ENCODE measurements at regions of chr11 and their contacts with region 1.

Region 1: DNA sequence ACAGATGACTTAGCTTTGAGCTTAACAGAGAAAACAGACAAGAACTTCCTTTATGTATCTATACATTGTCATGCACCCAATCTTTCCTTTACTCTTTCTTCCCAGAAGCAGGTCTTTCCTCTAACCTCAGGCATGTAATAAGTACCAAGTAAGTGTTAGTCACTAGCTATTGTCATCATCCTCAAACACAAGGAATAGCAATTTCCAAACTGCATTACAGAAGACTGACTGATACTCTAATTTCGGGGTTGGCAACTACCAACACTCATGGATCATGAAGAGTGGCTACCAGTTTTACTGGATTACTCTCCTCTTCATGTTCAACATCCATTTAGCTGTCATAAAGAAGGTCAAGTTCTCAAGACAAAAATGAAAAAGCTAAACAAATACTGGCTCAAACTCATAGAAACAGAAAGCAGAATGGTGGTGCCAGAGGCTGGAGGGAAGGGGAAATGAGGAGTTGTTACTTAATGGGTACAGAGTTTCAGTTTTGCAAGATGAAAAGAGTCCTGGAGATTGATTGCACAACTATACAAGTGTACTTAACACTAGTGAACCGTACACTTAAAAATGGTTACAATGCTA is 111.6 kb downstream of the SIK3 start:
- DNase-seq: no peak
- ATAC-seq: peak; percentile 78
- H3K4me3 Mint-ChIP-seq: peak overlapping the region; percentile 52
- H3K27ac Mint-ChIP-seq: peak overlapping the region; percentile 74
- H3K4me1 Mint-ChIP-seq: peaks cover 89% of the 10 kb centered on the region
- H3K27me3 Mint-ChIP-seq: no peaks in the 10 kb centered on the region
- CTCF ChIP-seq: no peak

Region 2: DNA sequence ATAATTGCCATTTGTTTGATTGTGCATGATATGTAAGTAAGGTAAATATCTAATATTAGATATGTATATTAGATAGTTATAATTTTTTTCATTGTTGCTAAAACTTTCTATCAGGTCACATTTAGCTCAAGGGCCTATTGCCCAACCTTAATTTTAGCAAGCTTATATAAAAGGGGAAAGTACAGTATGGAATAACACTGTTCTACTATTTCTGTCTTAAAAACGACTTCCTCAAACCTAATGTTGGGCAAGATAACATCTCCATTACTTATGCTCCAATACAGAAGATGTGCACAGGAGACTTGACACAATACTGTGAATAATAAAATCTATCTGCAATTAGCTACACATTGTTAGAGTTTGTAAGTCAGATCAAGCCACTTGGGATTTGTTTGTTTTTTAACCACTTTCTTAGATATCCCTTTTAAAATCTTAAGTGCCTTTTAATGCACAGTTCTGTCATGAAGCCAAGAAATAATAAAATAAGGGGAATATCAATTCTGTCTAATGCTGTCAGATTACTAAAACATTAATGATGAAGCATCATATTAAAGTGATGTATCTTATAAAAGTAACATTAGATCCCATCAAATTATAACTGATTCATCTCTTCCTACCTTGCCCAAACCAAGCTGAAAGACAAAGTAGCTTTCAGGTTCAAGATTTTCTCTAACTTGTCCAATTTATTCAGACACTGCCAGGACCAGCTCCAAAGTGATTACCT is 13.6 kb after region 1 on chr11:
- CTCF ChIA-PET with region 1: no interaction called
- POLR2A ChIA-PET with region 1: interaction called, 14 read pairs
- intact Hi-C with region 1: loop called (anchors 2 kb)
- DNase-seq: no peak
- ATAC-seq: no peak
- H3K4me3 Mint-ChIP-seq: no peak overlapping the region
- H3K27ac Mint-ChIP-seq: peak overlapping the region; percentile 0
- H3K4me1 Mint-ChIP-seq: peaks cover 65% of the 10 kb centered on the region
- H3K27me3 Mint-ChIP-seq: no peaks in the 10 kb centered on the region
- CTCF ChIP-seq: no peak

Region 3: GRCh38 chr11:117034901-117035300 is 48.3 kb after region 1 on chr11:
- CTCF ChIA-PET with region 1: no interaction called
- POLR2A ChIA-PET with region 1: no interaction called
- intact Hi-C with region 1: no loop called
- DNase-seq: no peak
- ATAC-seq: no peak
- H3K4me3 Mint-ChIP-seq: no peak overlapping the region
- H3K27ac Mint-ChIP-seq: no peak overlapping the region
- H3K4me1 Mint-ChIP-seq: peaks cover 53% of the 10 kb centered on the region
- H3K27me3 Mint-ChIP-seq: no peaks in the 10 kb centered on the region
- CTCF ChIP-seq: no peak

Measured in activated B cell treated with CpG ODN at 0.5 μM for 24 hours (primary cell).